ENCODE measurements at regions of chr7 and their contacts with region 1.

Region 1: GRCh38 chr7:94449148-94449725 is 54.5 kb downstream of the COL1A2 start:
- DNase-seq: no peak
- ATAC-seq: no peak
- H3K4me3 Mint-ChIP-seq: no peak overlapping the region
- H3K27ac Mint-ChIP-seq: no peak overlapping the region
- H3K4me1 Mint-ChIP-seq: no peaks in the 10 kb centered on the region
- H3K27me3 Mint-ChIP-seq: peaks cover 13% of the 10 kb centered on the region

Region 2: DNA sequence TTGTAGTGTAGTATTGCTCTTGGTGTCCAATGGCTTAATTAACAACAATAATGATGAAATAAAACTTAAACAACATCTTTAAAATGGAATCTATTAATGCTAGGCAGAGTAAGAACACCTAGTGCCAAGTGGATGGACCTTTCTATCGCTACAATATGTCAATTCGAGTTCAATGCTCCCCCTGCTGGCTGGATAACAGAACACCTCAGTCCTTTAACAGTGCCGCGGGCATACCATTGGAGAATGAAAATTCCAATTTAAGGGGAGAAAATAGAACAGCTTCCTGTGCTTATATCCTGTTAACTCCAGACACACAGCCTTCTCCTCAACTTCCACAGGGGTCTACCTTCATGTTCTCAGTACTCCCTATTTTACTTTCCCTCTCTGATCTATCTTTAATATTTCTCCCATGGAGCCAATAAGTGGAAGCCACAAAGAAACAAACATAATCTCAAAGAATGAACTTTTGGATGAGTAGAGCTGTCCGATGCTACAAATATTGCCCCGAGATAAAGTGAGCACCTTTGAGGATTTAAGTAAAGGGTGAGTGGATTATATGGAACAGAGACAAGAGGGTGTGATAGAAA is 13.1 kb before region 1 on chr7:
- CTCF ChIA-PET with region 1: interaction called, 24 read pairs
- POLR2A ChIA-PET with region 1: no interaction called
- DNase-seq: peak; percentile 67
- ATAC-seq: peak; percentile 63
- H3K4me3 Mint-ChIP-seq: no peak overlapping the region
- H3K27ac Mint-ChIP-seq: no peak overlapping the region
- H3K4me1 Mint-ChIP-seq: no peaks in the 10 kb centered on the region
- H3K27me3 Mint-ChIP-seq: peaks cover 11% of the 10 kb centered on the region

Region 3: GRCh38 chr7:94472608-94473007 is 23.4 kb after region 1 on chr7:
- CTCF ChIA-PET with region 1: no interaction called
- POLR2A ChIA-PET with region 1: no interaction called
- DNase-seq: no peak
- ATAC-seq: no peak
- H3K4me3 Mint-ChIP-seq: no peak overlapping the region
- H3K27ac Mint-ChIP-seq: no peak overlapping the region
- H3K4me1 Mint-ChIP-seq: no peaks in the 10 kb centered on the region
- H3K27me3 Mint-ChIP-seq: peaks cover 9% of the 10 kb centered on the region

Region 4: DNA sequence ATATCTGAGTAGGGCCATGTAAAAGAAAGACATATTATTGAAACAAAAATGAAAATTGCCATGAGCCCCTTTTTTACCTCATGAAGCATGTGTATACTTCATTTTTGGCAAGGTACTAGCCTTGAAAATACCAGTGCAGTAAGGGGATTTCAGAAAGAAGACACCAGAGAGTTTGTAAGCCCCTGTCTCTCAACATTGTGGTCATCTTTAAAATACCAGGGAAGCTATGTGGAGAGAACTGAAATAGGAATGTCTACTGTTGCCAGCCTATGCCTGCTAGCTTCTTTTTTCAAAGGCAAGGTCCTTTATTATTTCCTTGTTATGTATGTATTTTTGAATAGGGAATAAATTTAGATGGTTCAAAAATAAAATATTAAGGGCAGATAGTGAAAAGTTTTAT is 118.2 kb after region 1 on chr7:
- CTCF ChIA-PET with region 1: no interaction called
- POLR2A ChIA-PET with region 1: no interaction called
- DNase-seq: no peak
- ATAC-seq: no peak
- H3K4me3 Mint-ChIP-seq: no peak overlapping the region
- H3K27ac Mint-ChIP-seq: no peak overlapping the region
- H3K4me1 Mint-ChIP-seq: no peaks in the 10 kb centered on the region
- H3K27me3 Mint-ChIP-seq: no peaks in the 10 kb centered on the region

Region 5: GRCh38 chr7:94657771-94658693 is 208.8 kb after region 1 on chr7:
- CTCF ChIA-PET with region 1: interaction called, 19 read pairs
- POLR2A ChIA-PET with region 1: no interaction called
- DNase-seq: peak; percentile 94
- ATAC-seq: peak; percentile 91
- H3K4me3 Mint-ChIP-seq: peak overlapping the region; percentile 73
- H3K27ac Mint-ChIP-seq: peak overlapping the region; percentile 41
- H3K4me1 Mint-ChIP-seq: peaks cover 21% of the 10 kb centered on the region
- H3K27me3 Mint-ChIP-seq: peaks cover 17% of the 10 kb centered on the region

Region 6: GRCh38 chr7:95690367-95690947 is 1241.2 kb after region 1 on chr7:
- CTCF ChIA-PET with region 1: interaction called, 15 read pairs
- POLR2A ChIA-PET with region 1: no interaction called
- DNase-seq: peak; percentile 33
- ATAC-seq: peak; percentile 44
- H3K4me3 Mint-ChIP-seq: no peak overlapping the region
- H3K27ac Mint-ChIP-seq: no peak overlapping the region
- H3K4me1 Mint-ChIP-seq: peaks cover 2% of the 10 kb centered on the region
- H3K27me3 Mint-ChIP-seq: no peaks in the 10 kb centered on the region

Measured in activated CD8-positive, alpha-beta T cell treated with anti-CD3 and anti-CD28 coated beads, Interleukin-2, amount 10 ng/mL, durations not matched to agents 7 days and 5 days (primary cell).